Posterior vena cava (tissue), 2 donors: ENCODE measurements at regions of chr9 and their contacts with region 1.

Region 1: DNA sequence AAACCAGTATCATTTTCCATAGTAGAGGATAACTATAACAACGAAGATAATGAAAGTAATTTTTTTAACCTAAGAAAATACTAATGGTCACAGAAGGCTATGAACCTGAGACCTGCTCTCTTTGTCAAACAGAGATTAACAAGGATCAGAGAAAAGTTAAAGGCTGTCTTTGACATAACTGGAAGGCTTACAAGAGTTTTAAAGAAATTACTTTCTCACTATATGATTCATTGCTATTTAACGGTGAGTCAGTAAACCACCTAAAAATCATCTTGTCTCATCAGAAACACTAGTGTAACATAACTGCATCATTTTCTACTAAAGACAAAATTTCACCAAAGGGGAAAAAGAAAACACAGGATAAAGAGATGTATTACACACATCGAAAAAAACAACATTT is 19.3 kb downstream of the MLANA start:
- DNase-seq: no peak

Region 2: DNA sequence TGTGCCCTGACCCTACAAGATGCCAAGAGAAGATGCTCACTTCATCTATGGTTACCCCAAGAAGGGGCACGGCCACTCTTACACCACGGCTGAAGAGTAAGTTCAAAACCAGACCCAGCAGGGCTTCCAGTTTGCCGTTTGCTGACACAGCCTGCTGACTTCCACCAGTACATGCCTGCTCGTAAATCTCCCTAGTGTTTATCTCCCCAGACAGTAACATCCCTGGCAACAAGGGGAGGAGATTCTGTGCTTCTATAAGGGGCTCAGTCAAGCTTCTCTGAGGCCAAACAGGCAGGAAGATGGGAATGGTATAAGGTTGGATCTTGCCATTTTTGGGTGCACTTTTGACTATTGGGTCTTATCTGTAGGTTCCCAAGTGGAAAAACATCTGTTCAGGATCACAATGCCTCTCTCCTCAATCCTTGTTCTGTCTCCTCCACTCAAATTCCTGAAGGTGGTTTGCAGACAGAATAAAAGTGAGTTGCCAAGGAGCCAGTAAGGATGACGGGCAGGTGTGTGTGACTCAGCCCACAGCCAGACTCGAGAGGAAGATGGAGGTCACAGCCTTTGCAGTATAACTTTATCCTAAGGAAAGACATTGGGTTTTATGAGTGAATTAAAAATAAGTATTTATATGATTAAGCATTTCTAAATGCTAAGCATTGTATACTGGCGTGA is 17.4 kb before region 1 on chr9:
- intact Hi-C with region 1: no loop called
- DNase-seq: no peak

Region 3: GRCh38 chr9:5949103-5949699 is 39.2 kb after region 1 on chr9:
- intact Hi-C with region 1: no loop called
- DNase-seq: no peak

Region 4: DNA sequence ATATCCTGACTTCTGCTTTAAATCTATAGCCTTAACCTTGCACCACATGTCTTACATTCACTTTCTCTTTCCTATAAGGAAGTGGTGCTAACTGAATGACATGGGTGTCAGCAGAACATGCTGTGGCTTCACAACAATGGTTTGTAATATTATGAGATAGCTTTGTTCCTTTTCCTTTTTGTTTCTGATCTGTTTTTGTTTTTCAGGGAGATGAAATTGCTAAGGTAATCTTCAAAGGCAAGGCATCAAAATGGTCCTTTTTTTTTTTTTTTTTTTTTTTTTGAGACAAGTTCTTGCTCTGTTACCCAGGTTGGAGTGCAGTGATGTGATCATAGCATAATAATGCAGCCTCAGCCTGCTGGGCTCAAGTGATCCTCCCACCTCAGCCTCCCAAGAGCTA is 159.0 kb after region 1 on chr9:
- intact Hi-C with region 1: no loop called
- DNase-seq: no peak

Region 5: GRCh38 chr9:7186175-7186574 is 1276.2 kb after region 1 on chr9:
- intact Hi-C with region 1: loop called in 1 of 2 experiments (anchors 10 kb)
- DNase-seq: no peak